Panc1 (cell line): ENCODE measurements at regions of chr2 and their contacts with region 1.

Region 1: DNA sequence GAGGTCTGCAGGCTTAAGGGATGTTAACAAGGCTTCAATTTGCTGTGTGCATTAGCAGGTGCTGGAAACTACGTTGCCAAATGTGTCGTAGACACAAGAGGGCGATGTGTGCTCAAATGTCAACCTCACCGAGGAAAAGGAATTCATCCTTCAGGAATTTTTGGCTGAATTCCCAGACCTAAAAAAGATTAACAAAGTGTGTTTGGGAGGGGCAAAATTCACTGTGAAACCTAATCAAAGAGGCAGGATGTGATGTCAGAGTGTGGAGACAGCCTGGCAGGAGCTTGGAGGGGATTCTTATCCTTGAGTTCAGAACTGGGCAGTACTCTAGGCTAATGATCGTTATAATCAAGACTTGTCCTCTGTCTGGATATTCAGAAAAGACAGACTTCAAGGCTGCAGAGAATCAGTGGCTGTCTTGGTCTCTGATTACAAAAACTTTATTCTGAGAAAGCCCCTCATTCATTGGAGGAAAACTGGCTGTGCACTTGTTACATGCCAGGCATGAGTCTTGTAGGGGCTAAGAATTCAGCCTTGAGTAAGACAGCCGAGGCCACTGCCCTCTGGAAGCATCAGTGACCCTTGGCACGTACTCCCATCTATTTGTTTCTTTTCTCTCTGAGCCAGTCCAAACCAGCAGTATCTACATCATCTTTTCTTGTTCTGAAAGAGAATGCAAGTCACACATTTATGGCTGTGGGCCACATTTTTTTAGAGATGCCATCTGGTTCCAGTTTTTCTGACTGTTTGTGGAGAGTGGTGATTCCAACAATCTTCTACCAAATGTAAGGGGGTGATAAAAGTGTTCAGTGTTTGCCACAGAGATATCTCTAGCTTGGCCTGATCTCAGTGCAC is 18.7 kb upstream of the SCYGR1 start:
- DNase-seq: peak; percentile 86
- ATAC-seq: peak; percentile 95
- H3K4me3 ChIP-seq: peak overlapping the region in 1 of 2 experiments; percentile 1; a peak in 1 of 4 replicates
- H3K27ac ChIP-seq: peak overlapping the region; percentile 39
- H3K4me1 ChIP-seq: peaks cover 12% of the 10 kb centered on the region
- H3K27me3 ChIP-seq: no peaks in the 10 kb centered on the region
- CTCF ChIP-seq: peak; percentile 86

Region 2: DNA sequence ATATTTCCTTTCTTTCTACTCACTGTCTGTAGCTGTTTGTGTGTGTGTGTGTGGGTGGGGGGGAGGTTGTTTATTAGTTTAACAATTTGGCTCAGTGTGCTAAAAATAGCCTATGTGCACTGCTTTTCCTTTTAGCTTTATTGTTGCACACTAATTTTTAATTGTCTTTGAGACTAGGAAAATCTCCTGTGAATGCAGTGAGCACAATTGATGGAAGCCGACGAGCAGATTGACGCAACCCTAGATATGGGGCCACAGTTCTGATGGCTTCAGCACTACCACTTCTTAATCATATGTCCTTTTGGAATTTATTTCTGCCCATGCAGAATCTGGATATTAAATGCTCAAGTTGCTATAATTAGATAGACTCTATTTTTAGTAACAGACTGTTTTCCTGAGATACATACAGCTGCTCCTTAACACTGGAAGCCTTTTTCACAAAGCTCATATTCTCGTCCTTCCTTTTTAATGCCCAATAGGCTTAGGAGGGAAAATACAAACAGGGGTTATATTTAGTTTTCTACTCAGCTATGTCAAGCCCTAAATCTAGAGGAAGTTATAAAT is 715.9 kb before region 1 on chr2:
- CTCF ChIA-PET with region 1: no interaction called
- POLR2A ChIA-PET with region 1: no interaction called
- in situ Hi-C with region 1: no loop called
- intact Hi-C with region 1: no loop called
- DNase-seq: no peak
- ATAC-seq: no peak
- H3K4me3 ChIP-seq: no peak overlapping the region
- H3K27ac ChIP-seq: no peak overlapping the region
- H3K4me1 ChIP-seq: no peaks in the 10 kb centered on the region; the same call in 1 of the 2 replicates
- H3K27me3 ChIP-seq: no peaks in the 10 kb centered on the region
- CTCF ChIP-seq: no peak

Region 3: DNA sequence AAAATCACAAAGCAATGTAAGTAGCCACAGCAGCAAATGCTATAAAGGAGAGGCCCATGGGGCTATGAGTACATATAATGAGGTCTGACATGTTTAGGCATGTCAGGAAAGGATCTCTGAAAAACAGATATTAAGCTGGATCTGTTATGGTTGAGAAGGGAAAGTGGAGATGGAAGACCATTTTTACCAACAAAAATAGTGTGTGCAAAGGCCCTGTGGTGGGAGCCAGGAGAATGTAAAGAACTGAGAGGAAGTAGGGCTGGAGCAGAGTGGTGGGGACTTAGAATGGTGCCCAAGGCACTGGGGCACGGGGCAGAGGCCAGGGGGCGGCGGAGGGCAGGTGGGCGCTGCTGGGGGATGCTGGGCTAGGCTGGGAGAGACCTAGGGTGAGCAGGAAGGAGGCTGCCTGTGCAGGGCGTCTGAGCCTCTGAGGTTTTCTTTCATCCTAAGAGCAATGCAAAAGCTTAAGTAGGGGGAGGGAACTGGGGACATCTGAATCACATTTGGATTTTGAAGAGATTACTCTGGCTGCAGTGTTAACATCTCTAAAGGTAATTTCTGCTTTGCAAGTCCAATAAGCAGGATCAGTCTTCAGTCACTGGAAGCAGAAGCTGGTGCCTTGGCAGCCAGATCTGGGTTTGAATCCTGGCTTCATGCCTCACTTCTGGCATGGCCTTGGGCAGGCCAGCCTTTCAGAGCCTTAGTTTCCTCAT is 60.6 kb after region 1 on chr2:
- CTCF ChIA-PET with region 1: no interaction called
- POLR2A ChIA-PET with region 1: no interaction called
- in situ Hi-C with region 1: no loop called
- intact Hi-C with region 1: loop called (anchors 2 kb)
- DNase-seq: no peak
- ATAC-seq: no peak
- H3K4me3 ChIP-seq: no peak overlapping the region
- H3K27ac ChIP-seq: peak overlapping the region; percentile 82
- H3K4me1 ChIP-seq: peaks cover 55% of the 10 kb centered on the region
- H3K27me3 ChIP-seq: no peaks in the 10 kb centered on the region
- CTCF ChIP-seq: no peak

Region 4: GRCh38 chr2:227503433-227504406 is 97.3 kb after region 1 on chr2:
- CTCF ChIA-PET with region 1: no interaction called
- POLR2A ChIA-PET with region 1: interaction called, 11 read pairs
- in situ Hi-C with region 1: no loop called
- intact Hi-C with region 1: no loop called
- DNase-seq: peak; percentile 39
- ATAC-seq: peak; percentile 90
- H3K4me3 ChIP-seq: no peak overlapping the region
- H3K27ac ChIP-seq: 0 out of 2 replicates have a peak overlapping the region, but pooled peaks have one; percentile 18
- H3K4me1 ChIP-seq: peaks cover 16% of the 10 kb centered on the region
- H3K27me3 ChIP-seq: no peaks in the 10 kb centered on the region
- CTCF ChIP-seq: no peak

Region 5: GRCh38 chr2:227566012-227566411 is 159.6 kb after region 1 on chr2:
- CTCF ChIA-PET with region 1: interaction called, 3 read pairs
- POLR2A ChIA-PET with region 1: no interaction called
- in situ Hi-C with region 1: no loop called
- intact Hi-C with region 1: loop called (anchors 10 kb)
- DNase-seq: no peak
- ATAC-seq: no peak
- H3K4me3 ChIP-seq: no peak overlapping the region
- H3K27ac ChIP-seq: no peak overlapping the region
- H3K4me1 ChIP-seq: no peaks in the 10 kb centered on the region
- H3K27me3 ChIP-seq: no peaks in the 10 kb centered on the region
- CTCF ChIP-seq: no peak

Region 6: DNA sequence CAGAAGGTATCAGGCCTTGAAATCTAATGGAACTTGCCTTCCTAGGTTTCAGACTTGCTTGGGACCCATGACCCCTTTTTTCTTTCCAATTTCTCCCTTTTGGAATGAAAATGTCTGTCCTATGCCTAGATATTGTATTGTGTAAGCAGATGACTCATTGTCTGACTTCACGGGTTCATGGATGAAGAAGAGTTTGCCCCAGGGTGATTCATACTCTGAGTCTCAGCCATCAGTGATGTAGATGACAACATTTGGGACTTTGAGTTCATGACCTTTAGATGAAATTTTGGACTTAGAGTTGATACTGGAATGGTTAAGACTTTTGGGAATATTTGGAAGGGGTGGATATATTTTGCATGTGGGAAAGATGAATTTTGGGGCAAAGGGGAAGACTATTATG is 249.1 kb after region 1 on chr2:
- CTCF ChIA-PET with region 1: no interaction called
- POLR2A ChIA-PET with region 1: no interaction called
- in situ Hi-C with region 1: no loop called
- intact Hi-C with region 1: loop called (anchors 10 kb)
- DNase-seq: peak; percentile 32
- ATAC-seq: no peak
- H3K4me3 ChIP-seq: no peak overlapping the region
- H3K27ac ChIP-seq: no peak overlapping the region
- H3K4me1 ChIP-seq: no peaks in the 10 kb centered on the region
- H3K27me3 ChIP-seq: no peaks in the 10 kb centered on the region
- CTCF ChIP-seq: no peak

Region 7: GRCh38 chr2:227766373-227766883 is 360.0 kb after region 1 on chr2:
- CTCF ChIA-PET with region 1: no interaction called
- POLR2A ChIA-PET with region 1: no interaction called
- in situ Hi-C with region 1: no loop called
- intact Hi-C with region 1: loop called (anchors 2 kb)
- DNase-seq: peak; percentile 53
- ATAC-seq: peak; percentile 99
- H3K4me3 ChIP-seq: no peak overlapping the region
- H3K27ac ChIP-seq: no peak overlapping the region
- H3K4me1 ChIP-seq: no peaks in the 10 kb centered on the region
- H3K27me3 ChIP-seq: no peaks in the 10 kb centered on the region
- CTCF ChIP-seq: peak; percentile 84

Region 8: DNA sequence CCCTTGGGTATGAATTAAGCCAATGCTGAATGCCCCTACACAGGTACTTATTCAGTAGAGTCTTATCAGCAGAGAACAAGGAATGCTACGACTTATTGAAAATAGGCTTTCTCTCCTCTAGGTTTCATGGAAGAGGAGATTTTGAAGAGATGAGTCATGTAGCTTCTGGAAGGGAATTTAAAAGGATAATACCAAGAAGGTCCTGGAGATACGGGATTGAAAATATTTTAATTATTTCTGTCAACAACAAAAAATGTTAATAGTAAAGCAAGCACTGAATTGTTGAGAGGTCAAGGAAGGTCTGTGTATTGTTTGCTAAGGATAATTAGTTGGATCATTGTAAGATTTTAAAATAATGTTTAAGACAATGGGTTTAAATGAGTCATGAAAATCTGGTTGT is 1068.1 kb after region 1 on chr2:
- CTCF ChIA-PET with region 1: no interaction called
- POLR2A ChIA-PET with region 1: no interaction called
- in situ Hi-C with region 1: no loop called
- intact Hi-C with region 1: no loop called
- DNase-seq: no peak
- ATAC-seq: no peak
- H3K4me3 ChIP-seq: no peak overlapping the region
- H3K27ac ChIP-seq: no peak overlapping the region
- H3K4me1 ChIP-seq: no peaks in the 10 kb centered on the region
- H3K27me3 ChIP-seq: no peaks in the 10 kb centered on the region
- CTCF ChIP-seq: no peak